A673 (cell line): ENCODE measurements at regions of chr3 and their contacts with region 1.

Region 1: GRCh38 chr3:165476399-165477060 is 280.3 kb upstream of the SLITRK3 start:
- DNase-seq: no peak
- H3K4me3 ChIP-seq: no peak overlapping the region
- H3K27ac ChIP-seq: no peak overlapping the region
- H3K4me1 ChIP-seq: no peaks in the 10 kb centered on the region
- H3K27me3 ChIP-seq: no peaks in the 10 kb centered on the region
- CTCF ChIP-seq: no peak

Region 2: GRCh38 chr3:165491492-165491891 is 15.0 kb after region 1 on chr3:
- CTCF ChIA-PET with region 1: no interaction called
- POLR2A ChIA-PET with region 1: no interaction called
- intact Hi-C with region 1: no loop called
- DNase-seq: no peak
- H3K4me3 ChIP-seq: no peak overlapping the region
- H3K27ac ChIP-seq: no peak overlapping the region
- H3K4me1 ChIP-seq: no peaks in the 10 kb centered on the region
- H3K27me3 ChIP-seq: no peaks in the 10 kb centered on the region
- CTCF ChIP-seq: no peak

Region 3: GRCh38 chr3:165523801-165524200 is 47.3 kb after region 1 on chr3:
- CTCF ChIA-PET with region 1: no interaction called
- POLR2A ChIA-PET with region 1: interaction called, 18 read pairs
- intact Hi-C with region 1: no loop called
- DNase-seq: no peak
- H3K4me3 ChIP-seq: no peak overlapping the region
- H3K27ac ChIP-seq: no peak overlapping the region
- H3K4me1 ChIP-seq: no peaks in the 10 kb centered on the region
- H3K27me3 ChIP-seq: no peaks in the 10 kb centered on the region
- CTCF ChIP-seq: no peak

Region 4: DNA sequence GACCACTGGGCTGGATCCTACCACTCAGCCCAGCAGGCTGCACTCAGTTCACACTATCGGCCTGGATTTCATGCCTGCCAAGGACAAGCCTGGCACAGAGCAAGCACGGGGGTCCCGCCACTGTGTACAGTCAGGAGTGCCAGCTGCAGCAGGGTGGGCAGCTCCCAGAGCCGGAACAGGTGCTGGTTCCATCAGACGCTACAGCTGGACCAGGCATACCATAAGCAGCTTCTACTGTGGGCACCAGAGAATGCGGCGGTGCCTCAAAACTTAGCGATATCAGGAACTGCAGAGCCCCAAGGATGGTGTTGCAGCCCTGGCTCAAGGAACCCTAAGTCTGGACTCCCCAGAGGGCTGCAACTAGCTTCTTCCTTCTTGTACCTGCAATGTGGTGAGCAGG is 235.9 kb after region 1 on chr3:
- CTCF ChIA-PET with region 1: no interaction called
- POLR2A ChIA-PET with region 1: no interaction called
- intact Hi-C with region 1: no loop called
- DNase-seq: no peak
- H3K4me3 ChIP-seq: no peak overlapping the region
- H3K27ac ChIP-seq: no peak overlapping the region
- H3K4me1 ChIP-seq: no peaks in the 10 kb centered on the region
- H3K27me3 ChIP-seq: no peaks in the 10 kb centered on the region
- CTCF ChIP-seq: no peak